ENCODE measurements at regions of chr3 and their contacts with region 1.

Region 1: DNA sequence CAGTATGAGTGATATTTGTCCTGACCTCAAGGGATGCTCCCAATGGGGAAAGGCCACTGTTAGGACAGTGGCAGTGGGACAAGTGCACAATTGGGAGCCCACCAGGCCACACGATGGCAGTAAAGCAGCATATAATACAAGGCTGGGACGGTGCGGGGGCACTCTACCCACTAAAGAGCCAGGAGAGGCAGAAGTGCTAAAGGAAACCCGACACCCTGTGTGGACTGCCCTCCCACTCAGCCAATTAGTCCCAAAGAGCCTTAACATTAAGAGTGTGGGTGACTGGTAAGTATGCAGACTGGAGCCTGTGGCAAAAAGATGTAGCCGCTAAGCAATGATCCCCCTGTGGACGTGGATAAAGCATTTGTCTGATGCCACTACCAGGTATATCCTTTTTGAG is 8.2 kb upstream of the ZNF589 start:
- DNase-seq: peak; percentile 70
- H3K4me3 ChIP-seq: no peak overlapping the region
- H3K27ac ChIP-seq: no peak overlapping the region
- H3K4me1 ChIP-seq: peaks cover 0 to 14% (median 0%) of the 10 kb centered on the region in 4 donors
- H3K27me3 ChIP-seq: no peaks in the 10 kb centered on the region
- CTCF ChIP-seq: peak; percentile 15 to 39 (median 33)
- EP300 ChIP-seq: no peak
- POLR2A ChIP-seq: no peak

Region 2: DNA sequence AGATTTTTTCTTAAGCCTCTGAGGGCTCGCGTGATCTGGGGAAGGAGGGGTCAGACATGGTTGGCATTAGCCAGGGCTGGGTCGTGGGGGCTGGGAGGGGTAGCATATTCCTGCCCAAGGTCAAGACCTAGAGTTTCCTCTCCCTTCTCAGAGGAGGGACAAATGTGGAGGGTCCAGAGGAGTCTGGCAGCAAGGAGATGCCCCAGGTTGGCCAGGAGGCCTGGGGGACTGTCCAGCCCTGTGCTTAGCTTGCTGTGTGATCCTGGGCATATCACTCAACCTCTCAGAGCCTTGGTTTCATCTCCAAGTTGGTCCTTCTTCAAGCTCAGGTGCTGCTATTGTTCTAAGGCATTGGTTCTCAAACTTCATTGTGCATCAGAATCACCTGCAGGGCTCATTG is 18.5 kb before region 1 on chr3:
- in situ Hi-C with region 1: no loop called
- intact Hi-C with region 1: loop called (anchors 1 kb)
- DNase-seq: no peak
- H3K4me3 ChIP-seq: no peak overlapping the region
- H3K27ac ChIP-seq: no peak overlapping the region
- H3K4me1 ChIP-seq: peaks cover 0 to 19% (median 5%) of the 10 kb centered on the region in 4 donors
- H3K27me3 ChIP-seq: no peaks in the 10 kb centered on the region
- CTCF ChIP-seq: no peak
- EP300 ChIP-seq: no peak
- POLR2A ChIP-seq: no peak

Region 3: GRCh38 chr3:49120438-49121131 is 887.9 kb after region 1 on chr3 and contains the start of gene USP19:
- in situ Hi-C with region 1: no loop called
- intact Hi-C with region 1: no loop called
- DNase-seq: peak; percentile 97
- H3K4me3 ChIP-seq: peak within 1 kb of the TSS; percentile 64 to 86 (median 78)
- H3K27ac ChIP-seq: peak within 1 kb of the TSS; percentile 89 to 98 (median 94)
- H3K4me1 ChIP-seq: peaks cover 8 to 18% (median 13%) of the 10 kb centered on the region in 4 donors
- H3K27me3 ChIP-seq: no peaks in the 10 kb centered on the region
- CTCF ChIP-seq: peak in 2 of 5 experiments; percentile 22 to 35
- EP300 ChIP-seq: no peak
- POLR2A ChIP-seq: peak; percentile 90
- total RNA-seq, gene USP19: 66.5 to 86.2 (median 71.7) TPM

Measured in transverse colon (tissue), 4 donors.